Common myeloid progenitor, CD34-positive (primary cell): ENCODE measurements at regions of chr16 and their contacts with region 1.

Region 1: GRCh38 chr16:17382949-17383863 is 87.6 kb downstream of the XYLT1 start:
- DNase-seq: peak in 1 of 3 donors; percentile 50
- H3K4me3 ChIP-seq: peak overlapping the region in 3 of 7 experiments; percentile 10 to 41 (median 40)
- H3K27ac ChIP-seq: no peak overlapping the region
- H3K4me1 ChIP-seq: peaks cover 16 to 72% (median 60%) of the 10 kb centered on the region in 4 experiments
- H3K27me3 ChIP-seq: no peaks in the 10 kb centered on the region

Region 2: DNA sequence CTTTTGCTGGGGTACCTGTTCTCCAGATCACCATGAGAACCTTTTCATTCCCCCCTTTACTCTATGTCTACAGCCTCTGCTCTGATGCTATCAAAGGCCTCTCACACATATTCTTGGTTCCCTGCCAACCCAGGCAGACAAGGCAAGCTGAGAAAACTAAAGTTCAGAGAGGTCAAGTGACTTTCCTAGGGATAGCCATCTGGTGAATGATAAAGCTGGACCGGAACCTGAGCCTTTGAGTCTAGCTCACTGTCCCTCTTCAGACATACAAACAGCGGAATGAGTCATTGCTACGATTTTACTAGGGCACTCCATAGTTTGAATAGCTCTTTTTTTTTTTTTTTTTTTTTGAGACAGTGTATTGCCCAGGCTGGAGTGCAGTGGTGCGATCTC is 14.3 kb after region 1 on chr16:
- CTCF ChIA-PET with region 1: interaction called, 22 read pairs
- POLR2A ChIA-PET with region 1: no interaction called
- DNase-seq: peak in 2 of 3 donors; percentile 62 to 76
- H3K4me3 ChIP-seq: no peak overlapping the region
- H3K27ac ChIP-seq: peak overlapping the region; percentile 43 to 76
- H3K4me1 ChIP-seq: peaks cover 0 to 25% (median 17%) of the 10 kb centered on the region in 4 experiments
- H3K27me3 ChIP-seq: no peaks in the 10 kb centered on the region

Region 3: GRCh38 chr16:17431012-17431411 is 47.8 kb after region 1 on chr16:
- CTCF ChIA-PET with region 1: no interaction called
- POLR2A ChIA-PET with region 1: no interaction called
- DNase-seq: no peak
- H3K4me3 ChIP-seq: no peak overlapping the region
- H3K27ac ChIP-seq: no peak overlapping the region
- H3K4me1 ChIP-seq: peaks cover 2 to 7% (median 5%) of the 10 kb centered on the region in 4 experiments
- H3K27me3 ChIP-seq: no peaks in the 10 kb centered on the region